ENCODE measurements at regions of chr17 and their contacts with region 1.

Region 1: DNA sequence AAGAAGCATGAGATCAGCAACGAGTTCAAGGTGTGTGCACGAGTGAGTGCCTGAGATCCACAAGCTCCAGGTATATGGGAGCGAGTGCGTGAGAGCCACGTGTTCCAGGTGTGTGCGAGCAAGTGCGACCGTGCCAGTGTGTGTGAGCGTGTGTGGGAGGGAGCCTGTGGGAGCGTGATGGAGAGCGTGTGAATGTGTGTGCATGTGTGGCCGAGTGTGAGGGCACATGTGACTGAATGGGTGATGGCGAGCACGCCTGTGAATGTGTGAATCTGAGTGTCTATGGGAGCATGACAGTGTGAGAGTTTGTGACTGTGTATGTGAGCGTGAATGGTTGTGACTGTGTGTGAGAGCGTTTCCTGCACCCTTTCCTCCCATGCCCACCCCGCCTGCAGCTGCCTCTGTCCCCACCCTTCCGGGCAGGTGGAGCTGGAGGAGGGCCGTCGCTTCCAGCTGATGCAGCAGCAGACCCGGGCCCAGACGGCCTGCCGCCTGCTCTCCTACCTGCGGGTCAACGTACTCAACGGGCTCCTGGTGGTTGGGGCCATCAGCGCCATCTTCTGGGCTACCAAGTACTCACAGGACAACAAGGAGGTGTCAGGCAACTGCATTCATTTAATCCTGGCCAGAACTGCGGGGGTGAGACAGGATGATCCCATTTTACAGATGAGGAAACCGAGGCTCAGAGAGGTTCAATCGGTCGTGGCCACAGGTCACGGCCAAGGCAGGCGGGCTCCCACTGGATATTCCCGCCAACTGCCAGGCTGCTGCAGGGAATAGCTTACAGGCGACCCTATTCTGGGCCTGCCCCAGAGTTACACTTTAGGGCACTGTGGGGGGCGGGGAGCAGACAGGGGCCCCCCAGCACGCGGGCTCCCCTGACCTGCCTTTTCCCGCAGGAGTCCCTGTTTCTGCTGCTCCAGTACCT is 3.7 kb downstream of the TMC8 start:
- DNase-seq: peak; percentile 84
- H3K4me3 ChIP-seq: no peak overlapping the region
- H3K27ac ChIP-seq: no peak overlapping the region
- H3K4me1 ChIP-seq: no peaks in the 10 kb centered on the region; a peak in 1 of 4 replicates
- H3K27me3 ChIP-seq: peaks cover 3% of the 10 kb centered on the region
- CTCF ChIP-seq: peak; percentile 66
- EP300 ChIP-seq: no peak
- RAD21 ChIP-seq: peak; percentile 63

Region 2: DNA sequence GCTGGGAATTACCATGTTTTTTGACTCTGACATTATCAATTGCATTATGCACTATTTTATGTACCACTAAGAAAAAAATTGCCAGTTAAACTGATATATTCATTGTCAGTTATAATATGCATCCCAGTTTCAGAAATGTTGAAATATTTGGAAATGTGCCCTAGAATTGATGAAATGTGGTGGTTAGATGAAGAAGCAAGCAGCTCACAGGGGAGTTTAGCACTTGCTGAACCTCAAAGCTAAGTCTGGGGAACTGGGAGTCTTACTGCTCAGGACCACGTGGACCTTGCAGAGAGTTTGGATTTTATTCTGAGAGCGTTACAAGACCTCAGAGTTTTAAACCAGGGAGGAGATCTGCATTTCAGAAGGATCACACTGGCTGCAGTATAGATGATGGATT is 107.9 kb before region 1 on chr17:
- CTCF ChIA-PET with region 1: no interaction called
- POLR2A ChIA-PET with region 1: no interaction called
- DNase-seq: no peak
- H3K4me3 ChIP-seq: no peak overlapping the region
- H3K27ac ChIP-seq: no peak overlapping the region
- H3K4me1 ChIP-seq: peaks cover 0 to under 1% of the 10 kb centered on the region in 2 experiments; a peak in 2 of 4 replicates
- H3K27me3 ChIP-seq: no peaks in the 10 kb centered on the region
- CTCF ChIP-seq: no peak
- EP300 ChIP-seq: no peak
- RAD21 ChIP-seq: no peak

Region 3: DNA sequence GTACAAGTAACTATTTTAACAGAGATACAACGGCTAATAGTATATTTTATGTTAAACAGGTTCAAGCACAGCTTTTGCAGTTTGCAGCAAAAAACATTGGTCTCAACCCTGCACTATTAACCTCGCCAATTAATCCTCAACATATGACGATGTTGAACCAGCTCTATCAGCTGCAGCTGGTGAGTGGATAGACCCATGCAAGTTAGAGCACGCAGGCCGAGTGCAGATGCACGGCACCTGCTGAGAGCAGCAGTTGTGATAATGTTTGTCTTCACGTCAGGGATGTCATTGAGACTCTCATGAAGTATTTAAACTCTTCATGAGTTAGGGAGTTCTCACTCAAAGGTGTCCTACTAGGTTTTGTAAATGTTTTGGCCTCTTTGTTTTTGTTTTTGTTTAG is 51.2 kb before region 1 on chr17:
- CTCF ChIA-PET with region 1: interaction called, 11 read pairs
- POLR2A ChIA-PET with region 1: no interaction called
- DNase-seq: no peak
- H3K4me3 ChIP-seq: no peak overlapping the region
- H3K27ac ChIP-seq: no peak overlapping the region
- H3K4me1 ChIP-seq: no peaks in the 10 kb centered on the region
- H3K27me3 ChIP-seq: no peaks in the 10 kb centered on the region
- CTCF ChIP-seq: no peak
- EP300 ChIP-seq: no peak
- RAD21 ChIP-seq: no peak

Region 4: DNA sequence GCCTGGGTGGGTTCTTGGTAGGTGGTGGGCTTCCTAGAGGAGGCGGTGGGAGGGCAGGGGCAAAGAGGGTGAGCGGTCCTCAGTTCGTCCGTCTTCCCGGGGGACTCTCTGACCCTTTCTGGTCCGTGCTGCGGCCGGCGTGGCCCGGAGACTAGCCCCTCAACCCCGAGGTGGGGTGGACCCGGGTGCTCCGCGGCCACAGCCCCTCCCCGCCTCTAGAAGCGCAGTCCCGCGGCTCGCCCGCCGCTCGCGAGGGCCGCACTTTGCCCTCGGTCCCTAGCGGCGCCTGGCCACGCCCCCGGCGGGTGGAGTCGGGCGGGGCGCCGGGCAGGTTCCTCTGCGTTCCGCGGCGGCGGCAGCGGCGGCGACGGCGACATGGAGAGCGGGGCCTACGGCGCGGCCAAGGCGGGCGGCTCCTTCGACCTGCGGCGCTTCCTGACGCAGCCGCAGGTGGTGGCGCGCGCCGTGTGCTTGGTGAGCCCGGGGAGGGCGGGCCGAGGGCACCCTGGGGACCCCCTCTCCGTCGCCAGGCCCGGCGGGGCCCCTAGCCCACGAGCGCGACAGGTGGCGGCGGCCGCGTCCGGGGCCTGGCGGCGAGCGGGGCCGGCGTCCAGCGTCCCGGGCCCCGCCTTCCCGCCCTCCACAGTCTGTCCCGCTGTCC is 34.1 kb after region 1 on chr17 and contains the start of gene SYNGR2:
- CTCF ChIA-PET with region 1: interaction called, 19 read pairs
- POLR2A ChIA-PET with region 1: no interaction called
- DNase-seq: peak; percentile 99
- H3K4me3 ChIP-seq: peak within 1 kb of the TSS; percentile 71 to 85
- H3K27ac ChIP-seq: peak within 1 kb of the TSS in 1 of 2 experiments; percentile 64; a peak in 2 of 4 replicates
- H3K4me1 ChIP-seq: peaks cover 8 to 17% of the 10 kb centered on the region in 2 experiments; a peak in 2 of 4 replicates
- H3K27me3 ChIP-seq: no peaks in the 10 kb centered on the region
- CTCF ChIP-seq: no peak
- EP300 ChIP-seq: peak; percentile 24 to 31; a peak in 1 of 4 replicates
- RAD21 ChIP-seq: peak; percentile 18; the same call in 1 of the 2 replicates
- polyA plus RNA-seq, gene SYNGR2: 160 and 181 TPM in 2 replicates

Region 5: DNA sequence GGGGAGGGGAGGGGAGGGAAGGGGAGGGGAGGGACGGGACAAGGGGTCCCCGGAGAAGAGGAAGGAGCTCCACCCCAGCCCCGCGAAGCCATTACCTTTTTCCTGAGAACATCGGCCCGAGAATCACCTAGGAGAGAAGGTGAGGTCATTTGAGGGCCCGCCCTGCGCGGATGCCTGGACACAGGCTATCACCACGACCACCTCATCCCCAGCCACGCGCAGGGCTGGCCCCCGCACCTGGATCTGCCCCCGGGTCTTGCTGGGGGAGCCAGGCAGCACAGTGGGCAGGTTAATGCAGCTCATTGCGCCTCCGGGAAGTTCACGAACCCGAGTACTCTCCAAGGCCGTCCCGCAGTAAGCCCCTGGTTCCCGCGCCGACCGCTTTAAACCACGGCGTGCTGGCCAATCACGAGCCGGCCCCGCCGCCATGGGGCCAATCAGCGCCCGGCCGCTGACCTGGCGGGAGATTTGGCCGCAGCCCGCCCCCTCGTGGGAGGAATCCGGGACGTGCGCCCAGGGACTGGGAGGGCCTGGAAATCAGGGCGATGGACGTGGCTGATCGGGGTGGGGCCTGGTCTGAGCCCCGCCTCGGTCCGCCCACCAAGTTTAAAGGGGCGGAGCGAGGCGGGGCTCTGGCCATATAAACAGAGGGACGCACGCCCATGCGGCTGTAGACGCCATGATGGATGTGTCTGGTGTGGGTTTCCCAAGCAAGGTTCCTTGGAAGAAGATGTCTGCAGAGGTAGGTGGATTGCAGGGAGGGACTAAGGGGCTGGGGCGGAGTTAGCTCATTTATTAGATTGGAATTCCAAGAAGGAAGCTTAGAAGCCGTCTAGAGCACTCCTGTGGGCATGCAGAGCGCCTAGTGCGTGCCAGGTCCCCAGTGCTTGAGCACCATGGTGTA is 52.7 kb after region 1 on chr17 and contains the starts of genes AFMID and TK1:
- CTCF ChIA-PET with region 1: interaction called, 18 read pairs
- POLR2A ChIA-PET with region 1: no interaction called
- DNase-seq: peak; percentile 100
- H3K4me3 ChIP-seq: peak within 1 kb of the TSS; percentile 54 to 78
- H3K27ac ChIP-seq: peak within 1 kb of the TSS; percentile 26 to 48; a peak in 2 of 4 replicates
- H3K4me1 ChIP-seq: peaks cover 7% of the 10 kb centered on the region in 2 experiments; a peak in 2 of 4 replicates
- H3K27me3 ChIP-seq: no peaks in the 10 kb centered on the region
- CTCF ChIP-seq: peak; percentile 85
- EP300 ChIP-seq: no peak
- RAD21 ChIP-seq: peak; percentile 35
- polyA plus RNA-seq, gene AFMID: 44.4 and 59.0 TPM in 2 replicates
- polyA plus RNA-seq, gene TK1: 70.7 and 112 TPM in 2 replicates

Measured in SK-N-SH (cell line).